Activated B cell treated with CpG ODN at 0.5 μM for 24 hours (primary cell): ENCODE measurements at regions of chr7 and their contacts with region 1.

Region 1: DNA sequence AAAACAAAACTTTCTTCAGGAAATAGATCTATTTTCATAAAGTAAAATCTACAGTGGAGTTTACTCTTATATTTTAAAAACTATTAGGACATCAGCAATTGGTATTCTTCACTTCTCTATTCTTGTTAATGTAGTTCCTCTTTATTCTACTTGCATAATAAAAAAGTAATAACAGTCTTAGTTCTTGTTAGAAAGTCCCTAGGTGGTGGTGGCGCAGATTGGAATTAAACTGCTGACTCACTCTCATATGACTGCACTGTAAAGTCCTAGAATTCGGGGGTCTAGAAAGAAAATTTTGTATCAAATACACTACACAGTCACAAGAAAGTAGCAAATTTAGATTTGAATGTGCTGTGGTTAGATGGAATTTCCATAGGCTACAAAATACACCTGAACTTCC is 44.6 kb upstream of the TES start:
- DNase-seq: no peak
- ATAC-seq: peak; percentile 85
- H3K4me3 Mint-ChIP-seq: peak overlapping the region; percentile 61
- H3K27ac Mint-ChIP-seq: peak overlapping the region; percentile 92
- H3K4me1 Mint-ChIP-seq: peaks cover 82% of the 10 kb centered on the region
- H3K27me3 Mint-ChIP-seq: no peaks in the 10 kb centered on the region
- CTCF ChIP-seq: no peak

Region 2: GRCh38 chr7:116150588-116150987 is 15.1 kb before region 1 on chr7:
- CTCF ChIA-PET with region 1: interaction called, 5 read pairs
- POLR2A ChIA-PET with region 1: interaction called, 3 read pairs
- intact Hi-C with region 1: loop called (anchors 2 kb)
- DNase-seq: no peak
- ATAC-seq: peak; percentile 76
- H3K4me3 Mint-ChIP-seq: peak overlapping the region; percentile 74
- H3K27ac Mint-ChIP-seq: peak overlapping the region; percentile 73
- H3K4me1 Mint-ChIP-seq: peaks cover 72% of the 10 kb centered on the region
- H3K27me3 Mint-ChIP-seq: no peaks in the 10 kb centered on the region
- CTCF ChIP-seq: no peak

Region 3: GRCh38 chr7:116195451-116195850 is 29.7 kb after region 1 on chr7:
- CTCF ChIA-PET with region 1: no interaction called
- POLR2A ChIA-PET with region 1: no interaction called
- intact Hi-C with region 1: no loop called
- DNase-seq: no peak
- ATAC-seq: no peak
- H3K4me3 Mint-ChIP-seq: no peak overlapping the region
- H3K27ac Mint-ChIP-seq: no peak overlapping the region
- H3K4me1 Mint-ChIP-seq: no peaks in the 10 kb centered on the region
- H3K27me3 Mint-ChIP-seq: no peaks in the 10 kb centered on the region
- CTCF ChIP-seq: no peak

Region 4: GRCh38 chr7:116236020-116236630 is 70.4 kb after region 1 on chr7:
- CTCF ChIA-PET with region 1: interaction called, 52 read pairs
- POLR2A ChIA-PET with region 1: no interaction called
- intact Hi-C with region 1: no loop called
- DNase-seq: no peak
- ATAC-seq: peak; percentile 77
- H3K4me3 Mint-ChIP-seq: no peak overlapping the region
- H3K27ac Mint-ChIP-seq: no peak overlapping the region
- H3K4me1 Mint-ChIP-seq: peaks cover 27% of the 10 kb centered on the region
- H3K27me3 Mint-ChIP-seq: no peaks in the 10 kb centered on the region
- CTCF ChIP-seq: no peak

Region 5: DNA sequence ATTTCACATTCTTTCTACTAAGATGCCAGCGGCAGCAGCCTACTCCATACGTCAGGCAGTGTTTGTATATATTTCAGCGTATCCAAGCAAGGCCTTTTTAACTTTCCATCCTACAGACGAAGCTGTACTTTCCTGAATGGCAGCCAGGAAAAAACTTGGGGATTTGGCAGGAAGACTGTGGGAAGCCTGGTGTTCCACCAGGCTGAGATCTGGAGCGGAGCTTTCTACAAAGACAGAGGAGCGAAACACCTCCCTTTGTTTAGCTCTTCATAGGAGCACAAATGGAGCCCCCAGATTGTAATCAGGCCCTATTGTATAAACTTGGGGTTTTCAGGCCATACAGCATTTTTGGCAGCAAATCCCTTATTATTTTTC is 188.4 kb after region 1 on chr7:
- CTCF ChIA-PET with region 1: no interaction called
- POLR2A ChIA-PET with region 1: no interaction called
- intact Hi-C with region 1: no loop called
- DNase-seq: no peak
- ATAC-seq: no peak
- H3K4me3 Mint-ChIP-seq: no peak overlapping the region
- H3K27ac Mint-ChIP-seq: no peak overlapping the region
- H3K4me1 Mint-ChIP-seq: no peaks in the 10 kb centered on the region
- H3K27me3 Mint-ChIP-seq: peaks cover 2% of the 10 kb centered on the region
- CTCF ChIP-seq: no peak

Region 6: GRCh38 chr7:116671681-116672595 is 506.2 kb after region 1 on chr7 and contains the start of gene MET:
- CTCF ChIA-PET with region 1: interaction called, 5 read pairs
- POLR2A ChIA-PET with region 1: no interaction called
- intact Hi-C with region 1: loop called (anchors 5 kb)
- DNase-seq: peak; percentile 54
- ATAC-seq: peak; percentile 86
- H3K4me3 Mint-ChIP-seq: peak within 1 kb of the TSS; percentile 79
- H3K27ac Mint-ChIP-seq: no peak within 1 kb of the TSS
- H3K4me1 Mint-ChIP-seq: peaks cover 20% of the 10 kb centered on the region
- H3K27me3 Mint-ChIP-seq: peaks cover 64% of the 10 kb centered on the region
- CTCF ChIP-seq: no peak
- total RNA-seq, gene MET: 1.1 and 1.5 TPM in 2 replicates

Region 7: DNA sequence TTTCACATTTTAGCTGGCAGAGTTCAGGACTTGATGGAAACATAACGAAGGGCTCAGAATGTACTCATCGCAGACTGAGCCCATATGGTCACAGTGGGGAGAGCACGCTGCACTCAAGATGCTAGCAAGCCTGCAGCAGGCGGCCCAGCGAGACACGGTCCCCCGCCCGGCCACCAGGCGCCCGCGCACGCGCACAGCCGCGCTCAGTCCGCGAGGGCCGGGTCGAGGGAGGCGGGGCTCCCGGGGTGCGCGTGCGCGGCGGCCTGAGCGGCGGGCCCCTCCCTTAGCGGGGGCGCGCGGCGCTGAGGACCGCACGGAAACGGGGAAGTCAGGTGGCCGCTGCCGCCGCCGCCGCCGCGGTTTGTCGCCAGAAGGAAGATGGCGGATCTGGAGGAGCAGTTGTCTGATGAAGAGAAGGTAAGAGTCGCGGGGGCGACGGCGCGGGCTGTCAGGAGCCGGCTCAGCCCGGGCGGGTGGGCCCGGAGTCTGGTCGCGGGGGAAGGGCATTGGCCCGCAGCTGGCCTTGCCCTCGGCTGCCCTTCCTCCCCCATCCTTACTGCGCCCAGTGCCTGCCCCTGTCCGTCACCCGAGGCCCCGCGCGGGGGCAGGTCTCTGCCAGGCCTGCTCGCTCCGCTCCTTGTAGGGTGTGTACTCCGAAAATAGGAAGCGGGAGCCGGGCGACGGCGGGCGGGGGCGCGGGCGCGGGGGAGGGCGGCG is 696.7 kb after region 1 on chr7 and contains the start of gene CAPZA2:
- CTCF ChIA-PET with region 1: no interaction called
- POLR2A ChIA-PET with region 1: no interaction called
- intact Hi-C with region 1: loop called (anchors 2 kb)
- DNase-seq: peak; percentile 98
- ATAC-seq: peak; percentile 87
- H3K4me3 Mint-ChIP-seq: peak within 1 kb of the TSS; percentile 98
- H3K27ac Mint-ChIP-seq: peak within 1 kb of the TSS; percentile 93
- H3K4me1 Mint-ChIP-seq: peaks cover 39% of the 10 kb centered on the region
- H3K27me3 Mint-ChIP-seq: peaks cover 5% of the 10 kb centered on the region
- CTCF ChIP-seq: no peak
- total RNA-seq, gene CAPZA2: 101 and 110 TPM in 2 replicates

Region 8: DNA sequence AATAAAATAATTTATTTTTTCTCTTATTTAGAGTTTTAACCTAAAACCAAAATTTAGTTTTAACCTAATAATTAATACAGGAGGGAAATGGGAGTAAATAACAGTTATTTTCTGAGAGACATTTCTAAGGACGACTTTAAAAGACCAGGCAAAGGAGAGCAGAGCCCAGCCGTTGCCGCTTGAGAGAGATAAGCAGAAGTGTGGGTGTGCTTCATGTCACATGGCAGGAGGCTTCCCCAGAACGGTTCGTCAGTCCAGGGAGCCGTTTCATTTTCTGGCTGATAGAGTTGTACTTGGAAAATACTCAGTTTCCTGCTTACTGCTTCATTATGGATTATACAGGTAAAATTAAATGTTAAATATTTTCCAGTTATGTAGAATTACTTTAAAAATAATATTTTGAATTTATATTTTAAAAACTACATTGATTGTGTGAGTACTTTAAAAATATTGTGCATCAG is 849.0 kb after region 1 on chr7:
- CTCF ChIA-PET with region 1: no interaction called
- POLR2A ChIA-PET with region 1: interaction called, 5 read pairs
- intact Hi-C with region 1: loop called (anchors 10 kb)
- DNase-seq: no peak
- ATAC-seq: no peak
- H3K4me3 Mint-ChIP-seq: no peak overlapping the region
- H3K27ac Mint-ChIP-seq: no peak overlapping the region
- H3K4me1 Mint-ChIP-seq: peaks cover 50% of the 10 kb centered on the region
- H3K27me3 Mint-ChIP-seq: peaks cover 3% of the 10 kb centered on the region
- CTCF ChIP-seq: no peak